ENCODE measurements at regions of chr22 and their contacts with region 1.

Region 1: DNA sequence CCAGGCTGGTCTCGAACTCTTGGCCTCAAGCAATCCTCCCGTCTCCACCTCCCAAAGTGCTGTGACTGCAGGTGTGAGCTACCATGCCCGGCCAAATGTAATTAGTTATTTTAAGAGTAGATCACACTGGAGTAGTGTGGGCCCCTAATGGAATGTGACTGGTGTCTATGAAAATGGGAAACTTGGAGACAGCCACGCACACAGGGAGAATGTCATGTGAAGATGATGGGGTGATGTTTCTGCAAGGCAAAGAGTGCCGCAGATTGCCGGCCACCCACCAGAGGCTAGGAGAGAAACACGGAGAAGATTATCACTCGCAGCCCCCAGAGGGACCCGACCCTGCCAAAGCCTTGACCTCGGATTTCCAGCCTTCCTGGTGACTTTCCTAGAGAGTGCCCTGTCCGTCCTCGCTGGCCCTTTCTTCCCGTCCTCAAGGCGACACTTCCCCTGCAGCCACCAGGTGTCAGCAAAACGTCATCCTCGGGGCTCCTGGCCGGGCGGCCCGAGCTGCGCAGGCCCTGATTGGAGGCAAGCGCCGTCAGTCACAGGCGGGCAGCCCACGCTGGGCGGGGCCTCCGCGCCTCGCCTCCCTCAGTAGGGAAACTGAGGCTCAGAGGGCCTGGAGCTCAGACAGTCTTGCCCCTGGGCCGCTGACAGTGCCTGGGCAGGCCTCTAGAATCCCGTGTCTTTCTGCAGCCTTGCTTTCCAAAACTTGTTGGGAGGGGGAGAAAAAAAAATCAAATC is 16.3 kb downstream of the CRYBB2 start:
- DNase-seq: peak; percentile 70
- ATAC-seq: peak; percentile 85
- H3K4me3 ChIP-seq: no peak overlapping the region
- H3K4me3 Mint-ChIP-seq: no peak overlapping the region
- H3K27ac ChIP-seq: no peak overlapping the region
- H3K27ac Mint-ChIP-seq: no peak overlapping the region
- H3K4me1 ChIP-seq: peaks cover 0 to 3% of the 10 kb centered on the region in 2 donors
- H3K4me1 Mint-ChIP-seq: peaks cover 7% of the 10 kb centered on the region
- H3K27me3 ChIP-seq: peaks cover 0 to 17% (median 1%) of the 10 kb centered on the region in 4 experiments
- H3K27me3 Mint-ChIP-seq: peaks cover 42% of the 10 kb centered on the region
- CTCF ChIP-seq: peak; percentile 60

Region 2: DNA sequence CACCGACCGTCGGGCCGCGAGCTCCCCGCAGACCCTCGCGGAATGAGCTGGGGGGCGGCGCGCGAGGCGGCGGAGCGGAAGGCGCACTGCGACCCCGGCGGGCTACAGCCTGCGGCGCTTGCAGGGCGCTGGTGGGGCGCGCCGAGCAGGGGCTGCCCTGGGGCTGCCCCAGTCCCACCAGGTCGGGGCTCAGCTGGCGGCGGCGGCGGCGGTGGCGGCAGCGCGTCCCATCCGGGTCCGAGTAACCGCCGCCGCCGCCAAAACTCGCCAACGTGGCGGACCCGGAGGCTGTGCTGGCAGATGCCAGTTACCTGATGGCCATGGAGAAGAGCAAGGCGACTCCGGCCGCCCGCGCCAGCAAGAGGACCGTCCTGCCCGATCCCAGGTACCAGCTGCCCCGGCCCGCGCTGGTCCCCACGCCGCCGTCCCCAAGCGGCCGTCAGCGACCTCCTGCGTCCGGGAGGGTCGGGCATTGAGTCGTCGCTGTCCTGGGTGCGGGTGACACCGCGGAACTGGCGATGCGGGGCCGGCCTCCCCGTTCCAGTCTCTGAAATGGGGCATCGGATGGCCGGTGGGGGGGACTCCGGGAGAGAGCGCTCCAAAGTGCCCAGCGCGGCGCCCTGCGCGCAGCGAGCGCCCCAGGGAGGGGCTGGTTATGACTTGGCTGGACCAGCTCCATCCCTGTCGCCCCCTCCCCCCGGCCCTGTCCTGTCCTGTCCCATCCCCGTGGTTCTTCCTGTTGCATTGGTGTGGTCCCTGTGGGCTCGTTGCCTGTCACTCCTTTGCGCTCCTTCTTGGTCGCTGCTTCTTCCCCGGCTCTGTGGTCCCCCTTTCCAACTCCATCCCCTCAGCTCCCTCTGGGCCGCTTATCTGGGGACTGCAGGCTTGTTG is 47.2 kb after region 1 on chr22:
- CTCF ChIA-PET with region 1: interaction called, 13 read pairs
- POLR2A ChIA-PET with region 1: no interaction called
- intact Hi-C with region 1: loop called (anchors 2 kb)
- DNase-seq: peak; percentile 19
- ATAC-seq: peak; percentile 29
- H3K4me3 ChIP-seq: peak overlapping the region in 3 of 5 experiments; percentile 19 to 43 (median 21)
- H3K4me3 Mint-ChIP-seq: peak overlapping the region; percentile 86
- H3K27ac ChIP-seq: no peak overlapping the region
- H3K27ac Mint-ChIP-seq: peak overlapping the region; percentile 91
- H3K4me1 ChIP-seq: peaks cover 11 to 17% of the 10 kb centered on the region in 2 donors
- H3K4me1 Mint-ChIP-seq: peaks cover 36% of the 10 kb centered on the region
- H3K27me3 ChIP-seq: peaks cover 0 to 29% (median 5%) of the 10 kb centered on the region in 4 experiments
- H3K27me3 Mint-ChIP-seq: peaks cover 48% of the 10 kb centered on the region
- CTCF ChIP-seq: no peak

Region 3: GRCh38 chr22:25334162-25334490 is 98.4 kb after region 1 on chr22:
- CTCF ChIA-PET with region 1: interaction called, 23 read pairs
- POLR2A ChIA-PET with region 1: no interaction called
- intact Hi-C with region 1: no loop called
- DNase-seq: peak; percentile 46
- ATAC-seq: peak; percentile 80
- H3K4me3 ChIP-seq: no peak overlapping the region
- H3K4me3 Mint-ChIP-seq: no peak overlapping the region
- H3K27ac ChIP-seq: no peak overlapping the region
- H3K27ac Mint-ChIP-seq: no peak overlapping the region
- H3K4me1 ChIP-seq: no peaks in the 10 kb centered on the region
- H3K4me1 Mint-ChIP-seq: peaks cover 5% of the 10 kb centered on the region
- H3K27me3 ChIP-seq: no peaks in the 10 kb centered on the region
- H3K27me3 Mint-ChIP-seq: no peaks in the 10 kb centered on the region
- CTCF ChIP-seq: no peak